ENCODE measurements at regions of chr2 and their contacts with region 1.

Region 1: GRCh38 chr2:237674731-237675276 is 47.4 kb downstream of the LRRFIP1 start:
- DNase-seq: peak in 1 of 2 experiments; percentile 76
- H3K4me3 ChIP-seq: peak overlapping the region in 2 of 4 experiments; percentile 15 to 27; a peak in 2 of 8 replicates
- H3K27ac ChIP-seq: peak overlapping the region; percentile 69
- H3K4me1 ChIP-seq: peaks cover 6 to 19% (median 12%) of the 10 kb centered on the region in 4 experiments
- H3K27me3 ChIP-seq: no peaks in the 10 kb centered on the region
- CTCF ChIP-seq: no peak
- EP300 ChIP-seq: no peak
- POLR2A ChIP-seq: no peak
- RAD21 ChIP-seq: no peak

Region 2: DNA sequence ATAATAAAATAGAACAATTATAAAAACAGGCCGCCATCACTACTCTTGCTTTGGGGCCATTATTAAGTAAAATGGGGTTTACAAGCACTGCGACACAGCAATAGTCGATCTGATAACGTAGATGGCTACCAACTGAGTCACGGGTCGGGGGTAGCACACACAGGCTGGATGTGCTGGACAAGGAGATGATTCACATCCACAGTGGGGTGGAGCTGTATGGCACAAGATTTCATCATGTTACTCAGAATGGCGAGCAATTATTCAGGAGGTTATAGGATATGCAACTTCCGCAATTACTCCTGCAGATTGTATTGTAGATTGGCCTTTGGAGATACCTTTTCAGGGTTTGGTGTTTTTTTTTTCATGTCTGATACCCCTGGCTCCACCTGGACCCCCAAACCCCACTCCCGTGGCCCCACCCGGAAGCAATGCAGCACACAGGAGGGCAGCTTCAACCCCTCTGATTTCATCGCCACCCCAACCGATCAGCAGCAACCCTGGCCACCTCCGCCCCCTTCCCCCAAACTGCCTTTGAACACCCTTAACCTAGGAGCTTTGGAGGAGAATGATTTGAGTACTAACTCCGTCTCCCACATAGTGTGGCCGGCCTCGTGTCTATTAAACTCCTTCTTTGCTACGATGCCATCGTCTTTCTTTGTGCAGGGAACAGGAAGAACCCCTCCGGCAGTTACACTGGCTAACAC is 209.1 kb before region 1 on chr2:
- CTCF ChIA-PET with region 1: no interaction called
- POLR2A ChIA-PET with region 1: no interaction called
- DNase-seq: no peak
- H3K4me3 ChIP-seq: no peak overlapping the region
- H3K27ac ChIP-seq: no peak overlapping the region
- H3K4me1 ChIP-seq: no peaks in the 10 kb centered on the region; a peak in 1 of 7 replicates
- H3K27me3 ChIP-seq: no peaks in the 10 kb centered on the region
- CTCF ChIP-seq: no peak
- EP300 ChIP-seq: no peak
- POLR2A ChIP-seq: no peak
- RAD21 ChIP-seq: no peak

Region 3: GRCh38 chr2:237524631-237525030 is 150.2 kb before region 1 on chr2:
- CTCF ChIA-PET with region 1: no interaction called
- POLR2A ChIA-PET with region 1: no interaction called
- DNase-seq: no peak
- H3K4me3 ChIP-seq: no peak overlapping the region
- H3K27ac ChIP-seq: no peak overlapping the region
- H3K4me1 ChIP-seq: no peaks in the 10 kb centered on the region
- H3K27me3 ChIP-seq: no peaks in the 10 kb centered on the region
- CTCF ChIP-seq: no peak
- EP300 ChIP-seq: no peak
- POLR2A ChIP-seq: no peak
- RAD21 ChIP-seq: no peak

Region 4: DNA sequence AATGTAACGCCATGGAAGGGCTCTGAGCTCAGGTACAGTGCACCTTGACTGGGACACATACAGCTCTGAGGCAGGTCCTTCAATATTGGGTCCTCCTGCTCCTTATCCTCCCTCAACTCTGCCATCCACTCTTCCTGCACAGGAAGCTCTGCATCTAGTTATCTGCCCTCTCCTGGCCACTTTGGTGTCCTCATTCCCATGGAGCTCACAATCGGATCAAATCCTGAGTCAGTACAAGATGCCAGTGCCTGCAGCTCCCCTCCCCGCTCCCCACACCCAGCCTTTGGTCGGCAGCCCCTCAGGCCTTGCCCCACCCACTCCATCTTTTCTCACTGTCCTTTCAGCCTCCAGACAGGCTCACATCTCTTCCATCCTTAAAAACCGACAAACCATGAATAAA is 10.6 kb after region 1 on chr2:
- CTCF ChIA-PET with region 1: interaction called, 79 read pairs
- POLR2A ChIA-PET with region 1: interaction called, 3 read pairs
- DNase-seq: no peak
- H3K4me3 ChIP-seq: no peak overlapping the region
- H3K27ac ChIP-seq: no peak overlapping the region
- H3K4me1 ChIP-seq: no peaks in the 10 kb centered on the region
- H3K27me3 ChIP-seq: no peaks in the 10 kb centered on the region
- CTCF ChIP-seq: peak; percentile 35 to 67 (median 57)
- EP300 ChIP-seq: no peak
- POLR2A ChIP-seq: no peak
- RAD21 ChIP-seq: peak; percentile 44 to 64

Region 5: DNA sequence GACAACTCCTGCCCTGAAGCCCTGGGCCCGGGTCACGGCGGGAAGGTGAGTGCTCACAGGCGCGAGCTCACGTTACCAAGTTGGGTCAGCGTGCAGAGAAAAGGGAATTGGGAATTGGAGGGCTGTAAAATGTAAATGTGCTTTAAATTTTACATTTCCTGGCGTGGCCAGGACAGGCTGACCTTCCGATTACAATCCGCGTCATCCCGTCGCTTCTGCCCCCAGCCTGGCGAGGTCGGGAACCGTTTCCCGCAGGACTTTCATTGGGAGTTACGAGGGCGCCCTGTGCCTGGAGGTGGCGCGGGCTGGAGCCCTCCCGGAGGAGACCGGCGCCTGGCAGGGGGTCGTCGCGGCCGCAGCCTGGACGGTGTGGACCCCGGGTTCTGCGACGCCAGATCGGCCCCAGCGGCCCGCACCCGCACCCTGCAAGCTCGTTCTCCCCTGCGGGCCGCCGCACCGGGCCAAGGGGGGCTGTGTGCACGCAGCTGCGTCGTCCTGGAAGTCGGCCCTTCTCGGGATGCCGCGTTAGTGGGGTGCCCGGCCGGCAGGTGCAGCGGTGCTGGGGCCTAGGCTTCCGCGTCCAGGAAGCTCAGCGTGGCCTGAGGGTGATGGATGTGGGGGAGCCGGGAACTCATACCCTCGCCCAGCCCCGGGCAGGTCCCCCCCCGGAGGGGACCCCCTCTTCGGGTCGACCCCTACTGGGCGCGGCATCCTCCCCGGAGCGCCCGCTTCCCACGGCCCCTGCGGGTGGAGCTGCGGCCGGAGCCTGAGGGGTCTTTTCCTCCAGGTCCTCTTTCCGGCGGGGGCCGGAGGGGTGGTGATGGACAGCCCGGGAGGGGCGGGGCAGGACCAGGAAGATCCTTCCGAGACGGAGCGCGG is 16.5 kb after region 1 on chr2:
- CTCF ChIA-PET with region 1: interaction called, 28 read pairs
- POLR2A ChIA-PET with region 1: interaction called, 3 read pairs
- DNase-seq: peak in 1 of 2 experiments; percentile 99
- H3K4me3 ChIP-seq: peak overlapping the region; percentile 62 to 86 (median 68)
- H3K27ac ChIP-seq: no peak overlapping the region
- H3K4me1 ChIP-seq: peaks cover 6 to 15% (median 10%) of the 10 kb centered on the region in 4 experiments
- H3K27me3 ChIP-seq: peaks cover 0 to 9% (median 3%) of the 10 kb centered on the region in 4 experiments; a peak in 3 of 7 replicates
- CTCF ChIP-seq: no peak
- EP300 ChIP-seq: no peak
- POLR2A ChIP-seq: no peak
- RAD21 ChIP-seq: no peak

Region 6: DNA sequence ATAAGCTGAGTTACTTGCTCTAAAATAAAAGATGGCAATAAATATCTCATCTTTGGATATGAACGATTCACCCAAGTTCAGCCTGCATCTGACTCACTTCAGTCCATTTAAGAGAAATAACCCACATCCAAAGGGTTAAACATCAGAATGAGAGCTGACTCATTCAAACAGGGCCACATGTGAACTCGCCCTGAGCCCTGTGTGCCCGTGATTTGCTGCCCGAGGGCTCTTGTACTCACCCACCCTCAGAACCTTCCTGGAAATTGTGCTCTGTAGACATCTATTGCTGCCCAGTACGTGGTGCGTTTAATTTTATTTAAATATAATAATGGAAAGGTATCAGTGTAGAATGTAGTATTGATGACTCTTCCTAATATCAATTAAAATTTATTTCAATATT is 56.9 kb after region 1 on chr2:
- CTCF ChIA-PET with region 1: interaction called, 22 read pairs
- POLR2A ChIA-PET with region 1: interaction called, 3 read pairs
- DNase-seq: no peak
- H3K4me3 ChIP-seq: no peak overlapping the region
- H3K27ac ChIP-seq: no peak overlapping the region
- H3K4me1 ChIP-seq: peaks cover 8 to 27% (median 20%) of the 10 kb centered on the region in 4 experiments
- H3K27me3 ChIP-seq: no peaks in the 10 kb centered on the region
- CTCF ChIP-seq: no peak
- EP300 ChIP-seq: no peak
- POLR2A ChIP-seq: no peak
- RAD21 ChIP-seq: no peak

Region 7: GRCh38 chr2:238024986-238025385 is 350.2 kb after region 1 on chr2:
- CTCF ChIA-PET with region 1: no interaction called
- POLR2A ChIA-PET with region 1: no interaction called
- DNase-seq: no peak
- H3K4me3 ChIP-seq: no peak overlapping the region
- H3K27ac ChIP-seq: no peak overlapping the region
- H3K4me1 ChIP-seq: peaks cover 0 to 12% (median 6%) of the 10 kb centered on the region in 4 experiments; a peak in 6 of 7 replicates
- H3K27me3 ChIP-seq: no peaks in the 10 kb centered on the region
- CTCF ChIP-seq: no peak
- EP300 ChIP-seq: no peak
- POLR2A ChIP-seq: no peak
- RAD21 ChIP-seq: no peak

Measured in H1 (cell line).